IMR-90 (cell line): ENCODE measurements at regions of chrX and their contacts with region 1.

Region 1: DNA sequence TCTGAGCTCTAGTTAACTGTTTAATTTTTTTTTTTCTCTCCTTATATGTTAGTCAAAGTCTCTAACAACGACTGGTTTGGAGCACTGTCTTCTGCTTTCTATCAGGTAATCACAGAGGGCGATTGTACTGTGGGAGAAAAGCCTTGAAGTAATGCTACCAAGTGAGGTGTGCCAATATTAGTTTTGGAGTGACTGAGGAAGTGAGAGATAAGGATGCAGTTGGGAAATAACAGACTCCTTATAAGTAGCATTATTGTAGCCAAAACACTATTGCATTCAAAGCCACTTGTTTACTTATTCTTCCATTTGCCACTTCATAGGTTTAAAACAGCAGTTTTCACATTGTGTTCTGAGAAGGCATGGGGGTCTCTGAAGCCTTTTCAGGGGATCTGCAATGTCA is 79.1 kb upstream of the SLC6A14 start:
- DNase-seq: no peak
- ATAC-seq: no peak
- H3K4me3 ChIP-seq: no peak overlapping the region
- H3K27ac ChIP-seq: no peak overlapping the region
- H3K4me1 ChIP-seq: no peaks in the 10 kb centered on the region
- H3K27me3 ChIP-seq: no peaks in the 10 kb centered on the region
- CTCF ChIP-seq: no peak
- POLR2A ChIP-seq: no peak
- RAD21 ChIP-seq: no peak

Region 2: DNA sequence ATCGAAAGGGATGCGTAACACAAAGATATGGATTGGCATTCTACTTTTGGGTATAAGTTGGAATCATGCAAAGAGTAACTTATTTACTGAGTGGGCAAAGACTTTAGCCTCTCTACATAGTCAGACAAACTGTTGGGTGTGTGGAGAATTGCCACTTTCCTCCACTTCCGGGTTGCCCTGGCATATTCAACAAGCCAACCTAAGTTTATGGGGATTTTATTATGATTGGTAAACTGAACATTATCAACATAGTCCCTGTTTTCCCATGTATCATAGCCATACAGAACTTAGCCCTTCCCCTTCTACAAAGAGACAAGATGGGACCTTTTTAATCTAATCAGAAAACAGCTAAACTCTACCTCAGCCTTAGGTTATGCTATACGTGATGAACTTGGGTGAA is 65.1 kb before region 1 on chrX:
- CTCF ChIA-PET with region 1: no interaction called
- POLR2A ChIA-PET with region 1: no interaction called
- dilution Hi-C with region 1: no loop called
- in situ Hi-C with region 1: no loop called
- intact Hi-C with region 1: no loop called
- DNase-seq: no peak
- ATAC-seq: no peak
- H3K4me3 ChIP-seq: no peak overlapping the region
- H3K27ac ChIP-seq: no peak overlapping the region
- H3K4me1 ChIP-seq: no peaks in the 10 kb centered on the region
- H3K27me3 ChIP-seq: no peaks in the 10 kb centered on the region
- CTCF ChIP-seq: no peak
- POLR2A ChIP-seq: no peak
- RAD21 ChIP-seq: no peak

Region 3: GRCh38 chrX:116345958-116346357 is 11.4 kb before region 1 on chrX:
- CTCF ChIA-PET with region 1: interaction called, 11 read pairs
- POLR2A ChIA-PET with region 1: interaction called, 3 read pairs
- dilution Hi-C with region 1: no loop called
- in situ Hi-C with region 1: no loop called
- intact Hi-C with region 1: no loop called
- DNase-seq: no peak
- ATAC-seq: no peak
- H3K4me3 ChIP-seq: no peak overlapping the region
- H3K27ac ChIP-seq: no peak overlapping the region
- H3K4me1 ChIP-seq: no peaks in the 10 kb centered on the region
- H3K27me3 ChIP-seq: no peaks in the 10 kb centered on the region
- CTCF ChIP-seq: no peak
- POLR2A ChIP-seq: no peak
- RAD21 ChIP-seq: no peak